ENCODE measurements at regions of chr2 and their contacts with region 1.

Region 1: GRCh38 chr2:95115418-95115817 is 6.2 kb downstream of the MRPS5 start:
- DNase-seq: peak; percentile 66 to 76 (median 69)
- H3K4me3 ChIP-seq: no peak overlapping the region
- H3K4me3 Mint-ChIP-seq: peak overlapping the region in 1 of 8 donors; percentile 28
- H3K27ac ChIP-seq: no peak overlapping the region
- H3K27ac Mint-ChIP-seq: peak overlapping the region in 3 of 7 donors; percentile 66 to 75 (median 69)
- H3K4me1 ChIP-seq: peaks cover 36% of the 10 kb centered on the region
- H3K4me1 Mint-ChIP-seq: peaks cover 34 to 46% (median 36%) of the 10 kb centered on the region in 4 donors
- H3K27me3 ChIP-seq: no peaks in the 10 kb centered on the region
- H3K27me3 Mint-ChIP-seq: no peaks in the 10 kb centered on the region

Region 2: GRCh38 chr2:94874277-94875008 is 241.0 kb before region 1 on chr2:
- CTCF ChIA-PET with region 1: interaction called, 3 read pairs
- POLR2A ChIA-PET with region 1: no interaction called
- intact Hi-C with region 1: loop called (anchors 10 kb)
- DNase-seq: peak; percentile 32 to 45 (median 34)
- H3K4me3 ChIP-seq: no peak overlapping the region
- H3K4me3 Mint-ChIP-seq: no peak overlapping the region
- H3K27ac ChIP-seq: no peak overlapping the region
- H3K27ac Mint-ChIP-seq: no peak overlapping the region
- H3K4me1 ChIP-seq: no peaks in the 10 kb centered on the region
- H3K4me1 Mint-ChIP-seq: no peaks in the 10 kb centered on the region
- H3K27me3 ChIP-seq: no peaks in the 10 kb centered on the region
- H3K27me3 Mint-ChIP-seq: peaks cover 0 to 2% of the 10 kb centered on the region in 2 donors

Region 3: DNA sequence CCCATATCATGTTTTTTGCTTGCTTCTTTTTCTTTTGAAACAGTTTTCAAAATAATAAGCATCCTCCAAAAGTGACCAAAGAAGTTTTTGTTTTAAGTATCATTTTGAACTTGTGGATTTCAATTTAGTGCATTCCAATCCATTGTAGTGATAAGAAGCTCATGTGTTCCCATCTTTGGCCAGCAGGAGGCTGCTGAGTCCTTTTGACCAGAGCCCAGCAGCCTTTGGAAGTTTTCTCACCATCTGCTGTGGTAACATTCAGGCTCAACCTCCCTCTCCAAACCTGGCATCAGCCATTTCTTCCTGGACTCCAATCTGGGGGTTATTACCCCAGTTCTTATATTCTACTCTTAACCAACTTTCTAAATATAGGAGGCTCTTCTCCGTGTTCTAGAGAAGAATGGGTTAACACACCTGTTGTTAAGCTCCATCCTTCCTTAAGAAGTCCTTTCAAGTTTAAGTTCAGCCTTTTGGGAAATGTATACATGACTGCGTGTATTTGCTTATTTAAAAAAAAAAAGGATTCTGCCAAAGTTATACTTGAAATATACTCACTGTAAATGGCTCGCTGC is 128.9 kb before region 1 on chr2:
- CTCF ChIA-PET with region 1: interaction called, 13 read pairs
- POLR2A ChIA-PET with region 1: no interaction called
- intact Hi-C with region 1: loop called (anchors 1 kb)
- DNase-seq: peak in 4 of 5 donors; percentile 16 to 28 (median 20)
- H3K4me3 ChIP-seq: no peak overlapping the region
- H3K4me3 Mint-ChIP-seq: no peak overlapping the region
- H3K27ac ChIP-seq: no peak overlapping the region
- H3K27ac Mint-ChIP-seq: peak overlapping the region in 2 of 7 donors; percentile 39 to 49
- H3K4me1 ChIP-seq: no peaks in the 10 kb centered on the region
- H3K4me1 Mint-ChIP-seq: no peaks in the 10 kb centered on the region
- H3K27me3 ChIP-seq: no peaks in the 10 kb centered on the region
- H3K27me3 Mint-ChIP-seq: peaks cover 12 to 24% of the 10 kb centered on the region in 2 donors

Region 4: DNA sequence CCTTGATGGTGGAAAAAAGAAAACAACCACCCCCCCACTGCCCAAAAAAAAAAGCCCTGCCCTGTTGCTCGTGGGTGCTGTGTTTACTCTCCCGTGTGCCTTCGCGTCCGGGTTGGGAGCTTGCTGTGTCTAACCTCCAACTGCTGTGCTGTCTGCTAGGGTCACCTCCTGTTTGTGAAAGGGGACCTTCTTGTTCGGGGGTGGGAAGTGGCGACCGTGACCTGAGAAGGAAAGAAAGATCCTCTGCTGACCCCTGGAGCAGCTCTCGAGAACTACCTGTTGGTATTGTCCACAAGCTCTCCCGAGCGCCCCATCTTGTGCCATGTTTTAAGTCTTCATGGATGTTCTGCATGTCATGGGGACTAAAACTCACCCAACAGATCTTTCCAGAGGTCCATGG is 61.9 kb before region 1 on chr2:
- CTCF ChIA-PET with region 1: interaction called, 15 read pairs
- POLR2A ChIA-PET with region 1: no interaction called
- intact Hi-C with region 1: no loop called
- DNase-seq: no peak
- H3K4me3 ChIP-seq: no peak overlapping the region
- H3K4me3 Mint-ChIP-seq: peak overlapping the region in 2 of 8 donors; percentile 4 to 22
- H3K27ac ChIP-seq: no peak overlapping the region
- H3K27ac Mint-ChIP-seq: peak overlapping the region; percentile 22 to 87 (median 66)
- H3K4me1 ChIP-seq: peaks cover 42% of the 10 kb centered on the region
- H3K4me1 Mint-ChIP-seq: peaks cover 25 to 70% (median 45%) of the 10 kb centered on the region in 4 donors
- H3K27me3 ChIP-seq: no peaks in the 10 kb centered on the region
- H3K27me3 Mint-ChIP-seq: no peaks in the 10 kb centered on the region

Region 5: DNA sequence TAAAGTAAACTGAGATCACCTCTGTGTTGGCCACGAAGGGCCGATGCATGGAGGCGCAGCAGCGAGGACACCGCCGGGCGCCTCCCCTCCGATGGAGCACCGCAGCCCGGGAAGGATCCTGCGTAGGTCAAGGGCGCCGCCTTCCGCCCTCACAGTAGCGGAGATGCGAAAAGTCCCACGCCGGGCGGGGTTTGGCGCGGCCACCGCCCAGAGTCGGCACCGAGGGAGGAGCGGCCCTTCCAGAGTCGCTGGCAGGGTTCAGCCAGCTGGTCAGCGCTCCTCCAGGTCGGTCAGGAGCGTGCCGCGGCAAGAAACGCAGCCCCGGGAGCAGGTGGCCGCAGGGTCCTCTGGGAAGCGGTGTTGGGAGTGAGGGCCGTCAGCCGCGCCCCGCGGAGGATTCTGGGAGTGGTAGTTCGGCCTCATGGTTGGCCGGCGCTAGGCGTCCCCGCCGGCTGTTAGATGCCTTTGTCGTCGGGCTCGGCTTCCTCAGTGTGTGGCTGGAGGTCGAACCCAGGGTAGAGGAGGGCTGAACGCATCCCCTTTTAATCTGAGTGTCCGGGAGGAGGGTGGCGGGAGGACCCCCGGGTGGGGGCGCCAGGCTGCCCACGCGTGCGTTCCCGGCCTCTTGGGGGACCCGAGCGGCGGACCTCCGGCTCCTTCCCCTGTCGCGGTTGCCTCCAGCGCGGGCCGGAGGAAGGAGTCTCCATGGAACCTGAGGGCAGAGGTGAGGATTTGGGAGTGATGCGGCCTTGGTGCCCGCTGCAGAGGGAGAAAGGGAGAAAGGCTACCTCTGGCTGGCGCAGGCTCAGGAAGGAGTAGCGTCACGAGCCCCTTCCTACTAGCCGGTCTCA is 91.9 kb after region 1 on chr2 and contains the start of gene ZNF892:
- CTCF ChIA-PET with region 1: interaction called, 3 read pairs
- POLR2A ChIA-PET with region 1: no interaction called
- intact Hi-C with region 1: loop called (anchors 2 kb)
- DNase-seq: peak; percentile 68 to 78 (median 69)
- H3K4me3 ChIP-seq: peak within 1 kb of the TSS; percentile 47 to 93
- H3K4me3 Mint-ChIP-seq: peak within 1 kb of the TSS; percentile 93 to 97 (median 96)
- H3K27ac ChIP-seq: peak within 1 kb of the TSS; percentile 70
- H3K27ac Mint-ChIP-seq: peak within 1 kb of the TSS; percentile 71 to 92 (median 90)
- H3K4me1 ChIP-seq: peaks cover 15% of the 10 kb centered on the region
- H3K4me1 Mint-ChIP-seq: peaks cover 11 to 19% (median 15%) of the 10 kb centered on the region in 4 donors
- H3K27me3 ChIP-seq: no peaks in the 10 kb centered on the region
- H3K27me3 Mint-ChIP-seq: no peaks in the 10 kb centered on the region
- total RNA-seq, gene ZNF892: 4.7 to 5.9 TPM

Region 6: DNA sequence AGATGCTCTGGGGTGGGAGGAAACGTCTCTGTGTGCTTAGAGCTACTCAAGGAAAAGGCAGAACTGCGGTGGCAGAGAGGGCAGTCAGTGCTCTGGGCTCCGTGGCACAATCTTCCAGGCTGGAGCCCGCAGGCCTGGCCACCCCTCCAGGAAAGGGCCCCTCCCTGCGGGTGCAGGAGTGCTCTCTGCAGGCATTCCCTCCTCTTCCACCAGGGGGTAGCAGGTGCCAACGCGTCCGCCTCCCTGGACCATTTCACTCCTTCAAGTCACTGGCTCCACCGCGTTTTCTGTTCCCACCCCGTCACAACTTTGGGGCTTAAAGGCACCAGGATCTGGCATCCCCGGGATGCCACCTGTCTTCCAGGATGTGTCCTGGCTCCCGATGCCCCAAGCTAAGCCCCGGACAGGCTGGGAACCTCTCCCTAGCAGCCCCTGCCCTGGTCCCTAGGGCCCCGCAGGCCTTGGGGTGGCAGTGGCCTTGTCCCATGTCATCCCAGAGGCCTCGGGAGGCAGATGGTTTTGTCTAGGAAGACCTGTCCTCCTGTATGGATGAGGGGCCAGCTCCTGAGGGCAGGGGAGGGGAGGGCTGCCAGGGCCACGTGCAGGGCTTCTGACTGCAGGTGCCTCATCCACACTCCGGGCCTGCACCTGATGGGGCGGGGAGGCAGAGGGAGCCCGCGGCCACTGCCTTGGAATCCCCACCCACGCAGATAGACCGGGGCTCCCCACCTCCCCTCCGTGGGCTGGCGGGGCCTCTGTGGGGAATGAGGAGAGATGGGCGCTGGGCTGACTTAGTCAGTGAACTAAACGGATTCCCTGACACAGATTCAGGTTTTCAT is 208.1 kb after region 1 on chr2:
- CTCF ChIA-PET with region 1: no interaction called
- POLR2A ChIA-PET with region 1: no interaction called
- intact Hi-C with region 1: no loop called
- DNase-seq: no peak
- H3K4me3 ChIP-seq: no peak overlapping the region
- H3K4me3 Mint-ChIP-seq: no peak overlapping the region
- H3K27ac ChIP-seq: no peak overlapping the region
- H3K27ac Mint-ChIP-seq: no peak overlapping the region
- H3K4me1 ChIP-seq: no peaks in the 10 kb centered on the region
- H3K4me1 Mint-ChIP-seq: peaks cover 0 to 5% (median 0%) of the 10 kb centered on the region in 4 donors
- H3K27me3 ChIP-seq: no peaks in the 10 kb centered on the region
- H3K27me3 Mint-ChIP-seq: no peaks in the 10 kb centered on the region

Measured in CD4-positive, alpha-beta memory T cell (primary cell).